Calu3 (cell line): ENCODE measurements at regions of chr12 and their contacts with region 1.

Region 1: GRCh38 chr12:64890873-64891468 is 66.5 kb downstream of the TBC1D30 start:
- DNase-seq: peak; percentile 19
- H3K4me3 Mint-ChIP-seq: no peak overlapping the region
- H3K27ac Mint-ChIP-seq: no peak overlapping the region
- H3K4me1 Mint-ChIP-seq: peaks cover 16% of the 10 kb centered on the region
- H3K27me3 Mint-ChIP-seq: no peaks in the 10 kb centered on the region
- CTCF ChIP-seq: peak; percentile 64

Region 2: GRCh38 chr12:65100140-65100539 is 209.2 kb after region 1 on chr12:
- CTCF ChIA-PET with region 1: interaction called, 20 read pairs
- intact Hi-C with region 1: loop called (anchors 1 kb)
- DNase-seq: peak; percentile 39
- H3K4me3 Mint-ChIP-seq: no peak overlapping the region
- H3K27ac Mint-ChIP-seq: no peak overlapping the region
- H3K4me1 Mint-ChIP-seq: no peaks in the 10 kb centered on the region
- H3K27me3 Mint-ChIP-seq: peaks cover 13% of the 10 kb centered on the region
- CTCF ChIP-seq: peak; percentile 27

Region 3: GRCh38 chr12:65106948-65107347 is 216.0 kb after region 1 on chr12:
- CTCF ChIA-PET with region 1: interaction called, 20 read pairs
- intact Hi-C with region 1: loop called (anchors 1 kb)
- DNase-seq: no peak
- H3K4me3 Mint-ChIP-seq: no peak overlapping the region
- H3K27ac Mint-ChIP-seq: no peak overlapping the region
- H3K4me1 Mint-ChIP-seq: no peaks in the 10 kb centered on the region
- H3K27me3 Mint-ChIP-seq: peaks cover 14% of the 10 kb centered on the region
- CTCF ChIP-seq: peak; percentile 46

Region 4: GRCh38 chr12:65121049-65121955 is 230.3 kb after region 1 on chr12 and contains the start of gene WIF1:
- CTCF ChIA-PET with region 1: interaction called, 3 read pairs
- intact Hi-C with region 1: loop called (anchors 2 kb)
- DNase-seq: peak; percentile 55
- H3K4me3 Mint-ChIP-seq: peak within 1 kb of the TSS; percentile 69
- H3K27ac Mint-ChIP-seq: no peak within 1 kb of the TSS
- H3K4me1 Mint-ChIP-seq: peaks cover 8% of the 10 kb centered on the region
- H3K27me3 Mint-ChIP-seq: peaks cover 48% of the 10 kb centered on the region
- CTCF ChIP-seq: peak; percentile 82
- total RNA-seq, gene WIF1: not detected in 2 replicates

Region 5: DNA sequence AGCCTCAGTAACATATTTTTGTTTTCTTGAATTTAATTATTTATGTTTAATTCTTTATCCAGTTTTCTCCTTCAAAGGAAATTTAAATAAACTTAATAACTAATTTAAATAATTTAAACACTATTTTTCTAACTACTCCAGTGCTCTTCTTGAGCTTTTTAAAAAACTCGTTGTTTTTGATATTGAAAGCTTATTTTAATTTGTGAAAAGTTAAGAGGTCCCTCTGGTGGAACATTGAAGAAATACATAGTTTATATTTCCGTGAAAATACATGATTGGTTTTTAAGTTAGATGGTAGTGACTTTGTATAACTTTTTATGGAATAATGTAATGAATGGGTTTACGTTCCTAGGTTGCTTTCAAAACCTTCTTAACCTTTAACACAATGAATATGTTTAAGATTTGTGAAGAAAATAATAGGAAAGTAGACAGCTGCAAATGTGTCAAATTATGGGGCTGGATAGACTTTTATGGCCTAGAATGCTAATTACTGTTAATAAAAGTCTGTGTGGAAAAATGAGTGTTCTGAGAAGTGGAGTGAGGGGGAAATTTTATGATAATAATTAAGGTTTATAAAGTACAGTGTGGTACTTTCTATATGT is 341.6 kb after region 1 on chr12:
- CTCF ChIA-PET with region 1: interaction called, 7 read pairs
- intact Hi-C with region 1: loop called (anchors 1 kb)
- DNase-seq: no peak
- H3K4me3 Mint-ChIP-seq: no peak overlapping the region
- H3K27ac Mint-ChIP-seq: no peak overlapping the region
- H3K4me1 Mint-ChIP-seq: peaks cover 8% of the 10 kb centered on the region
- H3K27me3 Mint-ChIP-seq: no peaks in the 10 kb centered on the region
- CTCF ChIP-seq: peak; percentile 56